ENCODE measurements at regions of chr2 and their contacts with region 1.

Region 1: GRCh38 chr2:191012845-191013681 is 908 bp downstream of the STAT1 start:
- DNase-seq: peak in 1 of 35 experiments; percentile 42
- ATAC-seq: peak; percentile 2 to 25 (median 14)
- H3K4me3 ChIP-seq: peak overlapping the region; percentile 78 to 99
- H3K4me3 Mint-ChIP-seq: no peak overlapping the region
- H3K27ac ChIP-seq: peak overlapping the region; percentile 97
- H3K27ac Mint-ChIP-seq: no peak overlapping the region
- H3K4me1 ChIP-seq: peaks cover 43 to 46% of the 10 kb centered on the region in 2 experiments
- H3K4me1 Mint-ChIP-seq: peaks cover 40 to 55% (median 47%) of the 10 kb centered on the region in 3 donors
- H3K27me3 ChIP-seq: no peaks in the 10 kb centered on the region
- H3K27me3 Mint-ChIP-seq: no peaks in the 10 kb centered on the region

Region 2: DNA sequence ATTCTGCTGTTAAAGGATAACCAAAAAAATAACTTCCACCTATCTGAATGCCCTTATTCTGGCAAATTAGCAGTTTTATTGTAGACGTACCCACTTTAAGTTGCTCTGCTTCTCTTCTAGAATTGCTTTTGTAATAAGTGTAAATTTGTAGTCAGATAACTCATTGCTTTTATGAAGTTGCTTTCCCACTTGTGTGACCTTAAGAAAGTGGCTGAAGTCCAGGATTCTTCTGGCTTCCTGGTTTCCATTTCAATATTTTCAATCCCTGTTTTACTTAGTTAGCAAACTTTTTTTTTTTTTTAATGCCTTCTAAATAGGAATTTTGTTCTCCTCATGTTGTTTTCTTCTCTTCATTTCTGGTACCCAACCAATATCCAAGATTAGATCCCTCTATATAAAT is 72.6 kb before region 1 on chr2:
- CTCF ChIA-PET with region 1: no interaction called
- POLR2A ChIA-PET with region 1: no interaction called
- DNase-seq: no peak
- ATAC-seq: no peak
- H3K4me3 ChIP-seq: no peak overlapping the region
- H3K4me3 Mint-ChIP-seq: no peak overlapping the region
- H3K27ac ChIP-seq: no peak overlapping the region
- H3K27ac Mint-ChIP-seq: peak overlapping the region; percentile 1 to 48
- H3K4me1 ChIP-seq: no peaks in the 10 kb centered on the region
- H3K4me1 Mint-ChIP-seq: peaks cover 17 to 25% (median 21%) of the 10 kb centered on the region in 3 donors
- H3K27me3 ChIP-seq: no peaks in the 10 kb centered on the region
- H3K27me3 Mint-ChIP-seq: no peaks in the 10 kb centered on the region

Region 3: GRCh38 chr2:191023235-191023679 is 10.2 kb after region 1 on chr2:
- CTCF ChIA-PET with region 1: interaction called, 6 read pairs
- POLR2A ChIA-PET with region 1: interaction called, 7 to 14 read pairs
- DNase-seq: peak in 2 of 35 experiments; percentile 5 to 67
- ATAC-seq: peak; percentile 27 to 38 (median 34)
- H3K4me3 ChIP-seq: peak overlapping the region; percentile 50 to 52
- H3K4me3 Mint-ChIP-seq: no peak overlapping the region
- H3K27ac ChIP-seq: peak overlapping the region; percentile 90
- H3K27ac Mint-ChIP-seq: no peak overlapping the region
- H3K4me1 ChIP-seq: peaks cover 41% of the 10 kb centered on the region in 2 experiments
- H3K4me1 Mint-ChIP-seq: peaks cover 37 to 44% (median 39%) of the 10 kb centered on the region in 3 donors
- H3K27me3 ChIP-seq: no peaks in the 10 kb centered on the region
- H3K27me3 Mint-ChIP-seq: no peaks in the 10 kb centered on the region